ENCODE measurements at regions of chr18 and their contacts with region 1.

Region 1: GRCh38 chr18:25164848-25165811 is 186.8 kb downstream of the ZNF521 start:
- DNase-seq: peak in 1 of 2 donors; percentile 46
- ATAC-seq: peak; percentile 66
- H3K4me3 ChIP-seq: peak overlapping the region in 1 of 2 donors; percentile 11
- H3K27ac ChIP-seq: no peak overlapping the region
- H3K4me1 ChIP-seq: no peaks in the 10 kb centered on the region
- H3K27me3 ChIP-seq: no peaks in the 10 kb centered on the region

Region 2: GRCh38 chr18:25299426-25300300 is 134.5 kb after region 1 on chr18:
- intact Hi-C with region 1: loop called in 1 of 2 experiments (anchors 10 kb)
- DNase-seq: no peak
- ATAC-seq: no peak
- H3K4me3 ChIP-seq: no peak overlapping the region
- H3K27ac ChIP-seq: no peak overlapping the region
- H3K4me1 ChIP-seq: no peaks in the 10 kb centered on the region
- H3K27me3 ChIP-seq: no peaks in the 10 kb centered on the region

Region 3: DNA sequence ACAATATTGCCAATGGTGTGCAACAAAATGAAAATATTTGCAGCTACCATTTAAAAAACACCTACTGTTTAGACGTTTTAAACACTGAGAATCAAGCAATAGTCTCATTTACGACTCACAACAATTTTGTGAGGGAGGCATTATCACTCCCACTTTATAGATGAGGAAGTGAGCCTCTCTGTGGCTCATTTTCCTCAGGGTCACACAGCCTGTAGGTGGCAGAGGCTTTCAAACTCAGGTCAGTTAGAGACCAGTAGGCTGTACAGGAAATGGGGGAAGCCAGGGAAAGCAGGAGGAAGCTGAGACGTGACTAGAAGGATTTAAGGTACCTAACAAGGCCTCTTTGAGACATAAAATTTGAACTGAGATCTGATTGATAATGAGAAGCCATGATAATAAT is 281.8 kb after region 1 on chr18:
- intact Hi-C with region 1: loop called in 1 of 2 experiments (anchors 10 kb)
- DNase-seq: no peak
- ATAC-seq: no peak
- H3K4me3 ChIP-seq: no peak overlapping the region
- H3K27ac ChIP-seq: no peak overlapping the region
- H3K4me1 ChIP-seq: no peaks in the 10 kb centered on the region
- H3K27me3 ChIP-seq: no peaks in the 10 kb centered on the region

Measured in aorta (tissue), 5 donors.